ENCODE measurements at regions of chr2 and their contacts with region 1.

Region 1: GRCh38 chr2:120174963-120175581 is 48.1 kb downstream of the TMEM185B start:
- DNase-seq: peak; percentile 72
- ATAC-seq: no peak
- H3K4me3 ChIP-seq: no peak overlapping the region
- H3K4me3 Mint-ChIP-seq: no peak overlapping the region
- H3K27ac ChIP-seq: no peak overlapping the region
- H3K27ac Mint-ChIP-seq: peak overlapping the region; percentile 64
- H3K4me1 ChIP-seq: peaks cover 40 to 43% of the 10 kb centered on the region in 2 donors
- H3K4me1 Mint-ChIP-seq: peaks cover 42% of the 10 kb centered on the region
- H3K27me3 ChIP-seq: no peaks in the 10 kb centered on the region
- H3K27me3 Mint-ChIP-seq: no peaks in the 10 kb centered on the region
- CTCF ChIP-seq: peak; percentile 94

Region 2: DNA sequence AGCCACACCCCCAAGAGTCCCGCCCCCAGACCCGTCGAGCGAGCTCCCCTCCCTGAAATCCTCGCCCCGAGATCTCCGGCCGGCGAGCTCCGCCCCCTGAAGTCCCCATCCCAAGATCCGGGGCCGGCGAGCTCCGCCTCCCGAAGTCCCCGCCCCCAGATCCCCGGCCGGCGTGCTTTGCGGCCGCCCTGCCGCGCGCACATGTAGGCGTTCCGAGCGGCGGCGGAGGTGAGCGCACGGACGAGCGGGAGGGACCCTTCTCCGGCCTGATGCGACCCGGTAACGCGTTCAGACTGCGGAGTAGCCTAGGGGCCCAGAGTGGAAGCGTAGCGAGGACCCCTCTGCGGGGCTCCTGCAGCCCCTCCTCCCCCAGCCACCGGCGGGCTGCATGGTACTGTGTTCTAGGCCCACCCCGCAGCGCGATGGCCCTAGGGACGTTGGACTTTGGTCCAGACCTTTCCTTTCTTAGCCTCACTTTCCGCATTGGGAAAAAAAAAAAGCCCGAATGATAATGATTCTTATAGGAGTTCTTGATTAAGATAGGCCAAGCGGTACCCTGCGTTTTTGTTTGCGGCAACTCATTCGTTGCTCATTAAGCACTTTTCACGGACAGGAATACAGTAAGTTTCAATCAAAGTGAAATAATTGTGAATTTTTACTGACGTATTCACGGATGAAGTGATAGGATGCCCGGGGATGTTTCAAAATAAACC is 495.9 kb before region 1 on chr2 and contains the start of gene TMEM177:
- CTCF ChIA-PET with region 1: interaction called, 8 read pairs
- POLR2A ChIA-PET with region 1: no interaction called
- intact Hi-C with region 1: loop called (anchors 1 kb)
- DNase-seq: peak; percentile 90
- ATAC-seq: peak; percentile 96
- H3K4me3 ChIP-seq: peak within 1 kb of the TSS; percentile 76 to 100 (median 93)
- H3K4me3 Mint-ChIP-seq: peak within 1 kb of the TSS; percentile 84
- H3K27ac ChIP-seq: peak within 1 kb of the TSS; percentile 50 to 60
- H3K27ac Mint-ChIP-seq: peak within 1 kb of the TSS; percentile 84
- H3K4me1 ChIP-seq: peaks cover 10 to 20% of the 10 kb centered on the region in 2 donors
- H3K4me1 Mint-ChIP-seq: peaks cover 23% of the 10 kb centered on the region
- H3K27me3 ChIP-seq: no peaks in the 10 kb centered on the region
- H3K27me3 Mint-ChIP-seq: no peaks in the 10 kb centered on the region
- CTCF ChIP-seq: no peak
- total RNA-seq, gene TMEM177: 10.6 and 12.1 TPM in 2 replicates

Region 3: GRCh38 chr2:119753041-119753929 is 421.8 kb before region 1 on chr2:
- CTCF ChIA-PET with region 1: interaction called, 174 read pairs
- POLR2A ChIA-PET with region 1: no interaction called
- intact Hi-C with region 1: loop called (anchors 1 kb)
- DNase-seq: peak; percentile 67
- ATAC-seq: peak; percentile 78
- H3K4me3 ChIP-seq: no peak overlapping the region
- H3K4me3 Mint-ChIP-seq: no peak overlapping the region
- H3K27ac ChIP-seq: no peak overlapping the region
- H3K27ac Mint-ChIP-seq: no peak overlapping the region
- H3K4me1 ChIP-seq: no peaks in the 10 kb centered on the region
- H3K4me1 Mint-ChIP-seq: peaks cover 2% of the 10 kb centered on the region
- H3K27me3 ChIP-seq: no peaks in the 10 kb centered on the region
- H3K27me3 Mint-ChIP-seq: peaks cover 8% of the 10 kb centered on the region
- CTCF ChIP-seq: peak; percentile 73

Region 4: DNA sequence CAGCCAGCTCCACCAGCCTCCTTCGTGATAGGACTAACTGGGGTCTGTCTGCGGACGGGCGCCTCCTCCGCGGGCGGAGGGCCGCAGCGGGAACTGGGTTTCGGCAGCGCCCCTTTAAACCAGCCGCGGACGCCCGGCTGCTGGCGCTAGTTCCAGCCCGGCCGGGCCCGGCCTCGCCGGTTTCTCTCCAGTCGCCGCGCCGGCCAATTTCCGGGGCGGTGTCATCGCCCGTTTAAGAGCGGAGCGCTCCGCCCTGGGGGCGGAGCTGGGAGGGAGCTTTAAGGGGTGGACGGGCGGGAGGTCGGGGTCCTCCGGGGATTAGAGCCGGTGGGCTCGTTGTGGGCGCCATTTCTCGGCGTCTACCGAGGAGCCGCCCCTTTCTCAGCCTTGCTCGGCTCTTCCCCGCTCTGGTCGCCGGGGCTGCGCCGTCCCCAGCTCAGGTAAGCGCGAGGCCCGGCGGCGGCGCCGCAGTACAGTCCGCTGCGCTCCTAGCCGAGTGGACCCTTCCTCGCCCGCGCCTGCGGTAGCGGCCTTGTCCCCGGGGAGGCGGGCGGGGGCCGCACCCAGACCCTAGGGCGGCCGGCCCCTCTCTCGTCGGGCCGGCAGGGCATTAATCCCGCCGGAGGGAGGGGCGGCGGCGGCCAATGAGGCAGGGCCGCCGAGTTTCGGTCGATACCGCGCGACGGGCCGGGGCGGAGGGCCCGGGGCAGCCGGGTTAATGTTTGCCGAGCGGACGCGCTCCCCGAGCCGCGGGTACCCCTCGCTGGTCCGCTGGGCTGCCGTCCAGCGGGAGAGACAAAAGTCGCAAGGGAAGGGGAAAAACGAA is 162.1 kb before region 1 on chr2 and contains the start of gene EPB41L5:
- CTCF ChIA-PET with region 1: interaction called, 16 read pairs
- POLR2A ChIA-PET with region 1: interaction called, 3 read pairs
- intact Hi-C with region 1: loop called (anchors 1 kb)
- DNase-seq: peak; percentile 87
- ATAC-seq: peak; percentile 90
- H3K4me3 ChIP-seq: peak within 1 kb of the TSS; percentile 65 to 88 (median 77)
- H3K4me3 Mint-ChIP-seq: peak within 1 kb of the TSS; percentile 91
- H3K27ac ChIP-seq: peak within 1 kb of the TSS; percentile 58 to 80
- H3K27ac Mint-ChIP-seq: peak within 1 kb of the TSS; percentile 69
- H3K4me1 ChIP-seq: peaks cover 11 to 12% of the 10 kb centered on the region in 2 donors
- H3K4me1 Mint-ChIP-seq: peaks cover 30% of the 10 kb centered on the region
- H3K27me3 ChIP-seq: no peaks in the 10 kb centered on the region
- H3K27me3 Mint-ChIP-seq: no peaks in the 10 kb centered on the region
- CTCF ChIP-seq: no peak
- total RNA-seq, gene EPB41L5: 14.0 and 15.0 TPM in 2 replicates

Region 5: DNA sequence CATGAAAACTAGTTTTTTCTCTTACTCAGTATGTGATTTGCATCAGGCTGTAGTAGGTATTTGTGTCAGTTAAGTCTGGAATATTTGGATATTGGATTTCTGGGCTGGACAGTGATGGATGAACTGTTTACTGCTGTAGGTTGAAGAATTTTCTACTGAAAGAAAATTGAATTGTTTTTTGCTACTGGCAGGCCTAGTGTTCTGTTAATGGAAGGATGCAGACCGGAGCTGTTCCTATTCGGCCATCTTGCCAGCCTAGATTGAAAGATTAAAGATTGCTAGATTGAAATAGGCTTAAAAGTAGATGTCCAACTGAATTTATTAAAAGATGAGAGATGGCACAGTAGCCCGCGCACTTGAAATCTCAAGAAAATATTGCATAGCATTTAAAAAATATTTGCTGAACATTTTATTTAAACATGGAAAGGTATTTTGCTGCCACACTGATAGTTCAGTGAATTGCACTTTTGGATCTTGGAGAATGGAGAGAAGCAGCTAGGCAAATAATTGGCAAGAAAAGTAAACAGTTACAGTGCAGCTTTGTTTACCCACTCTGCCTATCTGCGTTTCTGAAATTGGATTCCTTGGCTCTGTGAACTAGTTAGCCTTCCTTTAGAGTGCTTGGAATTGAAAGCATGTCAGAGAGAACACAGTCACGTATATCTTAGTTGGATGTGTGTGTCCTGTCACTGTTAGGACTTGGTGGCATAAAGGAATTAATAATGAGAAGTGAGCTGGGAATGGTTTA is 108.1 kb before region 1 on chr2:
- CTCF ChIA-PET with region 1: no interaction called
- POLR2A ChIA-PET with region 1: no interaction called
- intact Hi-C with region 1: no loop called
- DNase-seq: no peak
- ATAC-seq: no peak
- H3K4me3 ChIP-seq: no peak overlapping the region
- H3K4me3 Mint-ChIP-seq: no peak overlapping the region
- H3K27ac ChIP-seq: no peak overlapping the region
- H3K27ac Mint-ChIP-seq: no peak overlapping the region
- H3K4me1 ChIP-seq: no peaks in the 10 kb centered on the region
- H3K4me1 Mint-ChIP-seq: no peaks in the 10 kb centered on the region
- H3K27me3 ChIP-seq: no peaks in the 10 kb centered on the region
- H3K27me3 Mint-ChIP-seq: no peaks in the 10 kb centered on the region
- CTCF ChIP-seq: no peak

Region 6: GRCh38 chr2:120231974-120232635 is 57.0 kb after region 1 on chr2:
- CTCF ChIA-PET with region 1: interaction called, 19 read pairs
- POLR2A ChIA-PET with region 1: no interaction called
- intact Hi-C with region 1: loop called (anchors 1 kb)
- DNase-seq: peak; percentile 85
- ATAC-seq: peak; percentile 91
- H3K4me3 ChIP-seq: peak overlapping the region; percentile 48 to 78 (median 73)
- H3K4me3 Mint-ChIP-seq: peak overlapping the region; percentile 91
- H3K27ac ChIP-seq: peak overlapping the region; percentile 57 to 87
- H3K27ac Mint-ChIP-seq: peak overlapping the region; percentile 92
- H3K4me1 ChIP-seq: peaks cover 26 to 37% of the 10 kb centered on the region in 2 donors
- H3K4me1 Mint-ChIP-seq: peaks cover 50% of the 10 kb centered on the region
- H3K27me3 ChIP-seq: no peaks in the 10 kb centered on the region
- H3K27me3 Mint-ChIP-seq: no peaks in the 10 kb centered on the region
- CTCF ChIP-seq: no peak

Region 7: GRCh38 chr2:120680136-120680761 is 505.2 kb after region 1 on chr2:
- CTCF ChIA-PET with region 1: no interaction called
- POLR2A ChIA-PET with region 1: no interaction called
- intact Hi-C with region 1: no loop called
- DNase-seq: peak; percentile 75
- ATAC-seq: peak; percentile 70
- H3K4me3 ChIP-seq: peak overlapping the region in 1 of 5 experiments; percentile 33
- H3K4me3 Mint-ChIP-seq: no peak overlapping the region
- H3K27ac ChIP-seq: no peak overlapping the region
- H3K27ac Mint-ChIP-seq: no peak overlapping the region
- H3K4me1 ChIP-seq: peaks cover 3% of the 10 kb centered on the region in 2 donors
- H3K4me1 Mint-ChIP-seq: peaks cover 2% of the 10 kb centered on the region
- H3K27me3 ChIP-seq: peaks cover 0 to 12% (median 0%) of the 10 kb centered on the region in 4 experiments
- H3K27me3 Mint-ChIP-seq: peaks cover 53% of the 10 kb centered on the region
- CTCF ChIP-seq: peak; percentile 42

Measured in B cell (primary cell).